ENCODE measurements at regions of chr3 and their contacts with region 1.

Region 1: GRCh38 chr3:109731620-109732473 is 394.5 kb upstream of the DPPA4 start:
- DNase-seq: peak; percentile 11 to 68 (median 55)
- ATAC-seq: peak; percentile 87
- H3K4me3 ChIP-seq: no peak overlapping the region
- H3K4me3 Mint-ChIP-seq: no peak overlapping the region
- H3K27ac ChIP-seq: no peak overlapping the region
- H3K27ac Mint-ChIP-seq: no peak overlapping the region
- H3K4me1 ChIP-seq: no peaks in the 10 kb centered on the region
- H3K4me1 Mint-ChIP-seq: peaks cover 0 to 12% (median 4%) of the 10 kb centered on the region in 7 donors
- H3K27me3 ChIP-seq: no peaks in the 10 kb centered on the region
- H3K27me3 Mint-ChIP-seq: no peaks in the 10 kb centered on the region

Region 2: GRCh38 chr3:108489771-108490170 is 1242.1 kb before region 1 on chr3:
- CTCF ChIA-PET with region 1: no interaction called
- POLR2A ChIA-PET with region 1: no interaction called
- intact Hi-C with region 1: loop called in 1 of 2 experiments (anchors 1 kb)
- DNase-seq: peak in 7 of 9 donors; percentile 43 to 64 (median 54)
- ATAC-seq: peak; percentile 86
- H3K4me3 ChIP-seq: no peak overlapping the region
- H3K4me3 Mint-ChIP-seq: no peak overlapping the region
- H3K27ac ChIP-seq: no peak overlapping the region
- H3K27ac Mint-ChIP-seq: no peak overlapping the region
- H3K4me1 ChIP-seq: no peaks in the 10 kb centered on the region
- H3K4me1 Mint-ChIP-seq: peaks cover 0 to 3% (median 0%) of the 10 kb centered on the region in 7 donors
- H3K27me3 ChIP-seq: no peaks in the 10 kb centered on the region
- H3K27me3 Mint-ChIP-seq: peaks cover 0 to 13% (median 0%) of the 10 kb centered on the region in 5 donors

Region 3: DNA sequence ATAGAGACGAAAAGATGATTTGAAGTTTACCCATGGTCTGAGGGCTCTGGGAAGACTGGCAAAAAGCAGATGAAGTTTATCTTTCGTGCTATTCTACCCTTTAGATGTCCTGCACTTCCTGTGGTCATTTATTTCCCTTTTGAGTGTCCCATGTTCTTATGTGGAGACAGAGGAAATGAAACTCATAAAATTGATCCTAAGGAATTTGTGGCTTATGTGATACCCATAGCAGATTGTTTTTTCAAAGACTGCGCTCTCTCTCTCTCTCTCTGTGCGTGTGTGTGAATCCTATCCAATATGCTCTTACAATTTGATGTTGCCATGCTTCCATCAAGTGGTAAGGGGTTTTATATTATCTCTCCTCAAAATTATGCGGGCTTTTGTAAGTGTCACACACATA is 213.0 kb after region 1 on chr3:
- CTCF ChIA-PET with region 1: no interaction called
- POLR2A ChIA-PET with region 1: no interaction called
- intact Hi-C with region 1: loop called in 1 of 2 experiments (anchors 2 kb)
- DNase-seq: no peak
- ATAC-seq: no peak
- H3K4me3 ChIP-seq: no peak overlapping the region
- H3K4me3 Mint-ChIP-seq: no peak overlapping the region
- H3K27ac ChIP-seq: no peak overlapping the region
- H3K27ac Mint-ChIP-seq: peak overlapping the region in 1 of 9 donors; percentile 3
- H3K4me1 ChIP-seq: no peaks in the 10 kb centered on the region
- H3K4me1 Mint-ChIP-seq: no peaks in the 10 kb centered on the region
- H3K27me3 ChIP-seq: no peaks in the 10 kb centered on the region
- H3K27me3 Mint-ChIP-seq: no peaks in the 10 kb centered on the region

Region 4: GRCh38 chr3:110093812-110094401 is 362.1 kb after region 1 on chr3:
- CTCF ChIA-PET with region 1: no interaction called
- POLR2A ChIA-PET with region 1: no interaction called
- intact Hi-C with region 1: no loop called
- DNase-seq: no peak
- ATAC-seq: no peak
- H3K4me3 ChIP-seq: no peak overlapping the region
- H3K4me3 Mint-ChIP-seq: no peak overlapping the region
- H3K27ac ChIP-seq: no peak overlapping the region
- H3K27ac Mint-ChIP-seq: no peak overlapping the region
- H3K4me1 ChIP-seq: no peaks in the 10 kb centered on the region
- H3K4me1 Mint-ChIP-seq: no peaks in the 10 kb centered on the region
- H3K27me3 ChIP-seq: no peaks in the 10 kb centered on the region
- H3K27me3 Mint-ChIP-seq: no peaks in the 10 kb centered on the region

Region 5: GRCh38 chr3:111080413-111080812 is 1348.6 kb after region 1 on chr3:
- CTCF ChIA-PET with region 1: no interaction called
- POLR2A ChIA-PET with region 1: no interaction called
- intact Hi-C with region 1: loop called (anchors 1 to 2 kb)
- DNase-seq: no peak
- ATAC-seq: no peak
- H3K4me3 ChIP-seq: no peak overlapping the region
- H3K4me3 Mint-ChIP-seq: no peak overlapping the region
- H3K27ac ChIP-seq: no peak overlapping the region
- H3K27ac Mint-ChIP-seq: no peak overlapping the region
- H3K4me1 ChIP-seq: no peaks in the 10 kb centered on the region
- H3K4me1 Mint-ChIP-seq: no peaks in the 10 kb centered on the region
- H3K27me3 ChIP-seq: no peaks in the 10 kb centered on the region
- H3K27me3 Mint-ChIP-seq: peaks cover 8 to 17% (median 11%) of the 10 kb centered on the region in 5 donors

Region 6: DNA sequence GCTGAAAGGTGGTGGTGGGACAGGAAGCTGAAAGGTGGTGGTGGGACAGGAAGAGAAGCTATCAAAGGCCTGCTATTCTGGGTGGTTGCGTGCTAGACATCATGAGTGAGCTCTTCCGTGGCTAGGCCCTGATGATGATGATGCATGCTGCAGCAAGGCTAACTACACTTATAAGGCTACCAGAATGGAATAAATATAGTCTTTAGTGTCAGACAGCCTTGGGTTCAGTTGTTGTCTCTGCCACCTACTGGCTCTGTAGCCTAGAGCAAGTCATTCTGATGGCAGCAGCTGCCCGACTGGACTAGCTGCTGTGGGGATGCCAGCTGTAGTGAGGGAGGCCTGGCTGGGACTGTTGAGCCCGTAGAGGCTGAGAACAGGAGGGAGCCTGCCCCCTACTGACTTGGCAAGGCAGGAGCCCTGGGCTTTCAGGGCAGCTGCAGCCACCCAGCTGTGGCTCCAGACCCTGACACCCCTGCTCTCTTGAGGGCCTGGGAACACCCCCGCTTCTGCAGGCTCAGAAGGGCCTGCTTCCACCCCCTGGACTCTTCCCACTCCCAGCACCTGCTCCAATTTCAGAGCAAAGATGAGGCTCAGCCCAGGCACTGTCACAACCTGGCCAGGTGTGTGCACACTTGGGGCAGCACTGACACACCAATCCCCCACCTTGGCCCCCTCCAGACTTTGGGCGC is 1884.7 kb after region 1 on chr3:
- CTCF ChIA-PET with region 1: no interaction called
- POLR2A ChIA-PET with region 1: no interaction called
- intact Hi-C with region 1: loop called in 1 of 2 experiments (anchors 10 kb)
- DNase-seq: peak in 8 of 9 donors; percentile 40 to 71 (median 66)
- ATAC-seq: peak; percentile 92
- H3K4me3 ChIP-seq: no peak overlapping the region
- H3K4me3 Mint-ChIP-seq: peak overlapping the region; percentile 2 to 64 (median 39)
- H3K27ac ChIP-seq: peak overlapping the region; percentile 43
- H3K27ac Mint-ChIP-seq: peak overlapping the region; percentile 52 to 95 (median 78)
- H3K4me1 ChIP-seq: peaks cover 21 to 32% of the 10 kb centered on the region in 2 donors
- H3K4me1 Mint-ChIP-seq: peaks cover 30 to 71% (median 58%) of the 10 kb centered on the region in 7 donors
- H3K27me3 ChIP-seq: no peaks in the 10 kb centered on the region
- H3K27me3 Mint-ChIP-seq: no peaks in the 10 kb centered on the region

Measured in naive thymus-derived CD4-positive, alpha-beta T cell (primary cell).